Activated CD4-positive, alpha-beta T cell treated with anti-CD3 and anti-CD28 coated beads, Interleukin-2, amount 10 ng/mL, durations not matched to agents 24 days and 14 days (primary cell): ENCODE measurements at regions of chr16 and their contacts with region 1.

Region 1: GRCh38 chr16:75647492-75648264 is at the starts of genes KARS1 and TERF2IP:
- DNase-seq: peak; percentile 99
- H3K4me3 Mint-ChIP-seq: peak within 1 kb of the TSS; percentile 89
- H3K27ac Mint-ChIP-seq: peak within 1 kb of the TSS; percentile 97
- H3K4me1 Mint-ChIP-seq: peaks cover 42% of the 10 kb centered on the region
- H3K27me3 Mint-ChIP-seq: no peaks in the 10 kb centered on the region
- total RNA-seq, gene KARS1: 285 and 296 TPM in 2 replicates
- total RNA-seq, gene TERF2IP: 86.8 and 89.1 TPM in 2 replicates

Region 2: GRCh38 chr16:74296432-74297144 is 1351.1 kb before region 1 on chr16 and contains the start of gene PSMD7:
- intact Hi-C with region 1: loop called (anchors 5 kb)
- DNase-seq: peak; percentile 97
- H3K4me3 Mint-ChIP-seq: peak within 1 kb of the TSS; percentile 89
- H3K27ac Mint-ChIP-seq: peak within 1 kb of the TSS; percentile 89
- H3K4me1 Mint-ChIP-seq: peaks cover 18% of the 10 kb centered on the region
- H3K27me3 Mint-ChIP-seq: no peaks in the 10 kb centered on the region
- total RNA-seq, gene PSMD7: 174 and 178 TPM in 2 replicates

Region 3: DNA sequence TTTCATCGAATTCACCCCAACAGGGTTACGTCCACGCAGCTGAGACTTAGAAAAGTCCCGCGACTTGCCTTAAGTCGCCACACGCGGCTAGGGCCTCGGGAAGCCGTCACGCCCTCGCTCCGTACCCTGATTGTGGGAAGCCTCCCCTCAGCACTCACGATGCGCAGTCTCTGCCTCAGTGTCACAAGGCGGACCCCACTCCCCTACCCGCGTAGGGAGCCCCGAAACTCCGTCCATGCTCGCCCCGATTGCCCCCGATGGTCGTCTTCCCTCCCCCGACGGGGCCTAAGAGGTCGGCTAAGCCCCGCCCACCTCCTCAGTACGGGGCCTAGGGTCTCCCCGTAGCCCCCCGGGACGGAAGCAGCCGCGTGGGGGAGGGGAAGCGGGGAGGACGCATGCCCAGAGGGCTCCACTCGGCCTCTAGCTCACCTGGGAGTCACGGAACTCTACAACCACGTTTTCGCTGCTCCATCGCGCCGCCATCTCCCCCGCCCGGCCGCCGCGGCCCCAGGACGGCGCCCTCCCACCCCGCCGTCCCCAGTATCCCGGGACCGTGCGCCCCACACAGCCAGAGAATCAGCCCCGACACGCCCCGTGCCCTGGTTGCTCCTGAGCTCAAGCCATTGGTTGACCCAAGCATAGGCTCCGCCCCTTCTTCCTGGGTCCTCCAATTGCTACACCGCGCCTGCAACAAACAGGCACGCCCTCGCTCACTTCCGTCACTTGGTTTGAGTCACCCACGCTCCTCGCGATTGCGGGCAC is 663.0 kb before region 1 on chr16 and contains the start of gene WDR59:
- intact Hi-C with region 1: loop called (anchors 5 kb)
- DNase-seq: peak; percentile 100
- H3K4me3 Mint-ChIP-seq: peak within 1 kb of the TSS; percentile 94
- H3K27ac Mint-ChIP-seq: peak within 1 kb of the TSS; percentile 95
- H3K4me1 Mint-ChIP-seq: peaks cover 16% of the 10 kb centered on the region
- H3K27me3 Mint-ChIP-seq: no peaks in the 10 kb centered on the region
- total RNA-seq, gene WDR59: 80.6 and 91.5 TPM in 2 replicates

Region 4: DNA sequence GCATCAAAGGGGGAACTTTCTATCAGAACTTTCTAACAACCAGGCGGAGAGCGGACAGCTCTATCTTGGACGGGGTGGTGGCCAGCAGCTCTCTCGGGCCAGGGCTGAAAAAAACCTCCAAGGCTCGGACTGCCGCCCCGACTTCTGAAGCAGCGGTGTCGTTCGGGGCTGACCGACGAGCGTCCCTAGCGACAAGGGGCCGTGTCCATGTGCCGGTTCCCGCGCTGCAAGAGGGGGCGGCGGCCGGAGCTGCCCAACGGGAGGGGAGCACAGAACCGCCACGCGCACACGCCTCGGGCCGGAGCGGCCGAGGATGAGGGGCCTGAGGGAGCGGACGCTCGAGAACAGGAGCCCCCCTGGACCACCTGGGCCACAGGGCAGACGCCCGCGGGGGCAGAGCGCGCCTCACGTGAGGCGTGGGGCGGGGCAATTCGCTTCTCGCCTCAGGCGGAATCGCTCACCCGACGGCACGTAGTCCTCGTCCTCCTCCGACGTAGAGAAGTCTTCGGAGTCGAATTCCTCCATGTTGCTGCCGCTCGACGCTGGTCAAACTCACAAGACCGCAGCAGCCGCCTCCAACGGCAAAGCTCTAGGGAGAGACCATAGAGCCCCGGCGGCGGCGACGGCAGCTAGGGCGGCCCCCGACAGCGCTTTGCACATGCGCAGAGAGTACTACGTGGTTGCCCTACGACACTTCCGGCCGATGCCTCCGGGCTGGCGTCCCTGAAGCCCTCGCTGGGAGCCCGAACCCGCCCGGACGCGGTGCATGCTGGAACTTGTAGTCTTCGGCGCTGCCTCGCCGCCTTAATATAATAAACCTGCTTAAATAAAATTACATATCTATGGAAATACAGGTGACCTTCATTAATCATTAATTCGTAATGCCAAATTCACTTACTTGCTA is 214.6 kb before region 1 on chr16 and contains the start of gene CFDP1:
- intact Hi-C with region 1: loop called (anchors 2 kb)
- DNase-seq: peak; percentile 99
- H3K4me3 Mint-ChIP-seq: peak within 1 kb of the TSS; percentile 83
- H3K27ac Mint-ChIP-seq: peak within 1 kb of the TSS; percentile 94
- H3K4me1 Mint-ChIP-seq: peaks cover 23% of the 10 kb centered on the region
- H3K27me3 Mint-ChIP-seq: no peaks in the 10 kb centered on the region
- total RNA-seq, gene CFDP1: 33.7 and 38.9 TPM in 2 replicates

Region 5: GRCh38 chr16:75519881-75520280 is 127.8 kb before region 1 on chr16:
- intact Hi-C with region 1: loop called (anchors 2 kb)
- DNase-seq: no peak
- H3K4me3 Mint-ChIP-seq: no peak overlapping the region
- H3K27ac Mint-ChIP-seq: no peak overlapping the region
- H3K4me1 Mint-ChIP-seq: peaks cover 10% of the 10 kb centered on the region
- H3K27me3 Mint-ChIP-seq: peaks cover 7% of the 10 kb centered on the region

Region 6: DNA sequence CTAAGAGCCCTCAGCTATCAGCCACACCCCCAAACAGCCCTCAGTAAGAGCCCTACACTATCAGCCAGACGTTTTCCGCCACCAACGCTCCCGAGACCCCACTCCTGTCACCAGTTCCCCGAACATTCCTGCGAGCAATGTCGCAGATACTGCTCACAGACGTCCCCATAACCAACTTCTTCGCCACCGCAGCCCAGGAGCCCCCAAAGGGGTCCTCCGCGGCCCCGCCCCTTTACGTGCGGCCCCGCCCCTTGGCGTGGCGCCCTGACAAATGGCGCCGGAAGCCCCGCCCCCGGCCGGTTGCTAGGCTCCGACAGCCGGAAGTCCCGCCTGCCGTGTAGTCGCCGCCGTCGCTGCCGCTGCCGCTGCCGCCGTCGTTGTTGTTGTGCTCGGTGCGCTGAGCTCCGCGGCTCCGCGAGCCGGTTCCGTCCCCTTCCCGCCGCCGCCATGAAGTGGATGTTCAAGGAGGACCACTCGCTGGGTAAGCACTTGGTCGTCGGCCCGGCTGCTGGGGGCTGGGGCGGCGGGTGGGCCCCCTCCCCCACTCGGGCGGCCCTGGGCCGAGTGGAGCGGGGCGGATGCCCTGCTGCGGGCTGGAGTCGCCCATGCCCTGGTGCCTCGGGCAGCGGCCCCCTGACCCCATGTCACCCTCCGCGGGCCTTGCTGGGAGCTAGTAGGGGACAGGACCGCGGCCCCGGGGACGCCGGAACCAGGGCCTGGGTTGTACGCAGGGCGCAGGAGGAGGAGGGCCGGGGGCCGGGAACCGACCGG is 81.5 kb before region 1 on chr16 and contains the start of gene GABARAPL2:
- intact Hi-C with region 1: loop called (anchors 1 kb)
- DNase-seq: peak; percentile 98
- H3K4me3 Mint-ChIP-seq: peak within 1 kb of the TSS; percentile 90
- H3K27ac Mint-ChIP-seq: peak within 1 kb of the TSS; percentile 87
- H3K4me1 Mint-ChIP-seq: peaks cover 28% of the 10 kb centered on the region
- H3K27me3 Mint-ChIP-seq: peaks cover 14% of the 10 kb centered on the region
- total RNA-seq, gene GABARAPL2: 69.9 and 70.4 TPM in 2 replicates

Region 7: GRCh38 chr16:75764154-75764768 is 116.6 kb after region 1 on chr16:
- intact Hi-C with region 1: loop called (anchors 1 kb)
- DNase-seq: peak; percentile 88
- H3K4me3 Mint-ChIP-seq: no peak overlapping the region
- H3K27ac Mint-ChIP-seq: no peak overlapping the region
- H3K4me1 Mint-ChIP-seq: peaks cover 4% of the 10 kb centered on the region
- H3K27me3 Mint-ChIP-seq: peaks cover 7% of the 10 kb centered on the region